ENCODE measurements at regions of chr5 and their contacts with region 1.

Region 1: DNA sequence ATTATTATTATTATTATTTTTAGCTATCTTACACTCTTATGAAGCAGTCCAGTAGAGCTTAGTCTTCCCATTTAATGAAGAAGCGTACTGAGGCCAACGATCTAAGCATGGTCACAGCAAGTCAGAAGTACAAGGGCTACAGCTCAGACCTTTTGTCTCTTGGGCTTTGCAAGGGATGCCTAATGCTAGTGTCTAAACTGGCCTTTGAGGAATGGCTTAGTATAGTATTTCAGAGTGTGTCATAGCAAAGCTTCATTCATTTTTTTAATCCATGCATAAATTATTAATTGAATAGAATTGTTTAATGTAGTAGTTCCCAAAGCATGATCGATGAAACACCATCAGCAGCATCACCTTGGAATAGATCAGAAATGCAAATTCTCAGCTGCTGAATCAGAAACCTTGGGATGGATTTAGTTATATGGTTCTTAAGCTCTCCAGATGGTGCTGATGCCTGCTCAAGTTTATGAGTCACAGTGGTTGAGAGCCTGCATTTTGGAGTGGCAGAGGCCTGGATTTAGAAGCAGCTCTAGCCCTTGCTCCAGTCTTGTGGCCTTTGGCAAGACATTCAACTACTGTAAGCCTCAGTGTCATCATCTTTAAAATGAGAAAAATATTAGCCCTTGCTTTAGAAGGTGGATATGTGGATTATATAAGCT is 6.1 kb downstream of the IL12B start:
- DNase-seq: no peak
- H3K4me3 ChIP-seq: no peak overlapping the region
- H3K27ac ChIP-seq: no peak overlapping the region
- H3K4me1 ChIP-seq: no peaks in the 10 kb centered on the region
- H3K27me3 ChIP-seq: no peaks in the 10 kb centered on the region
- CTCF ChIP-seq: no peak
- POLR2A ChIP-seq: no peak

Region 2: DNA sequence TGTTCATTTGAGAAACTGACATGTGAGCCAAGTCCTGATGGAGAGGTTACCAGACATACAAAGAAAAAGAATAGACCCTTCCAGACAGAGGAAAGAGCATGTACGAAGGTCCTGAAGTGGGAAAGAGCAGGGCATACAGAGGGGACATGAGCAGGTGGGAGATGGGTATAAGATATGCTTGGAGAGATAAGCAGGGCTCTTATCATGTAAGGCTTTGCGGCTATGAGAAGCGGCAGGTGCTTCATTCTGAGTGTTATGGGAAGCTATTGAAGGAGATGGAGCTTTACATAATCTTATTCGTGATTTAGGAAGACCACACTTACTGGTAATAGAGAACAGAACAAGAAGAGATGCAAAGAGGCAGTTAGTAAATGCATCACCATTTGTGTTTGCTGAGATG is 641.6 kb before region 1 on chr5:
- intact Hi-C with region 1: no loop called
- DNase-seq: no peak
- H3K4me3 ChIP-seq: no peak overlapping the region
- H3K27ac ChIP-seq: no peak overlapping the region
- H3K4me1 ChIP-seq: no peaks in the 10 kb centered on the region
- H3K27me3 ChIP-seq: no peaks in the 10 kb centered on the region
- CTCF ChIP-seq: no peak
- POLR2A ChIP-seq: no peak

Region 3: DNA sequence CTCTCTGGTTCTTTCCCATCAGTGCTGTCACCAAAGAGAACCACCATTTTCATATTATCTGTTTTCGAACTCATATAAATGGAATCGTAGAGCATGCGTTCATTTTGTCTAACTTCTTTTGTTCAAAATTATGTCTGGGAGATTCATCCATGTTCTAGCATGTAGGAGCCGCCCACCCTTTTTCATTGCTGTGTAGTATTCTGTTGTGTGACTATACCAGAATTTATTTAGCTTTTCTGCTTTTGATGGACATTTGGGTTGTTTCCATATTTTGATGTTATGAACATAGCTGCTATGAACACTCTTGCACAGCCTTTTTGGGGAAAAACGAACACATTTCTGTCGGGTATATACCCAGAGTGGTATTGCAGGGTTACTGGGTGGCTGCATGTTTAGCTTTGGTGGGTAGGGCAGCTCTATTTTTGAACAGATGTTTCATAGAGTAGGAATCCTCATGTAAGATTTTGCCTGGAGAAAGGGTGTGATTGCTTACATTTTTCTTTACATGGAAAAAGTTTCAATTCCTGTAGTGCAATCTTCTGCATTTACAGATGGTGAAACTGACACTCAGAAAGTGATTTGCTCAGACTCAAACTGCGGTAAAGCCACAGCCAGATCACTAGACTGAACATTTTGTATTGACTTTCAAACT is 106.3 kb after region 1 on chr5:
- intact Hi-C with region 1: loop called in 1 of 2 experiments (anchors 10 kb)
- DNase-seq: no peak
- H3K4me3 ChIP-seq: no peak overlapping the region
- H3K27ac ChIP-seq: no peak overlapping the region
- H3K4me1 ChIP-seq: no peaks in the 10 kb centered on the region
- H3K27me3 ChIP-seq: no peaks in the 10 kb centered on the region
- CTCF ChIP-seq: no peak
- POLR2A ChIP-seq: no peak

Region 4: GRCh38 chr5:159712672-159713071 is 388.4 kb after region 1 on chr5:
- intact Hi-C with region 1: no loop called
- DNase-seq: no peak
- H3K4me3 ChIP-seq: no peak overlapping the region
- H3K27ac ChIP-seq: no peak overlapping the region
- H3K4me1 ChIP-seq: no peaks in the 10 kb centered on the region
- H3K27me3 ChIP-seq: no peaks in the 10 kb centered on the region
- CTCF ChIP-seq: no peak
- POLR2A ChIP-seq: no peak